Naive thymus-derived CD4-positive, alpha-beta T cell (primary cell): ENCODE measurements at regions of chr2 and their contacts with region 1.

Region 1: DNA sequence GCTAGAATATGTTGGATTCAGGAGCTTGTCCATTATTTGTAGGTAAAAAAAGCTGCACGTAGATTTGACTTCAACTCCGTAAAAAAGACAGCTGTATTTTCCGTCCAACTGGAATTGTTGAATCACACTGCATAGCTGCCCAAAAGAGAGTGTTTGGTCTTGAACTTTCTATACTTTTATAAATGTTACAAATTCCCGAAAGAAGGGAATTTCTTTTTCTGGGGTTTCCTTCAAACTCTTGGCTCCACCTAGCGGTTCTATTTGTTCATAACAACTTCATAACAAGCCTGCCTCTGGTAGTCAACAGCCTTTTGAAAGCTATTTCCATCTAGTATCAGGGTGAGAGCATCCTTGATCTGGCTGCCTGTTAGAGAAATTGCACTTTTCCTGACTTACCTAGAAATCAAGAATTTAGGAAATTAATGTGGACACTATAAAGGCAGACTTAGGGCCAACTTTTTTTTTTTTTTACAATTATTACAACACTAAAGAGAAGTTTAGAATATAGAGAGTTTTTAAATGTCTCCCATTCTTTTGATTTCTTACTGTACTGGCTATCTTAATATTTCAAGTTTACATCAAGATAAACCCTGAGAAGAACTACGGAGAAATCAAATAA is 48.1 kb downstream of the TMEM185B start:
- DNase-seq: peak in 7 of 9 donors; percentile 37 to 63 (median 56)
- ATAC-seq: no peak
- H3K4me3 ChIP-seq: no peak overlapping the region
- H3K4me3 Mint-ChIP-seq: peak overlapping the region in 5 of 10 donors; percentile 7 to 50 (median 20)
- H3K27ac ChIP-seq: peak overlapping the region; percentile 79
- H3K27ac Mint-ChIP-seq: peak overlapping the region in 8 of 9 donors; percentile 84 to 99 (median 96)
- H3K4me1 ChIP-seq: peaks cover 17 to 49% of the 10 kb centered on the region in 2 donors
- H3K4me1 Mint-ChIP-seq: peaks cover 13 to 53% (median 43%) of the 10 kb centered on the region in 7 donors
- H3K27me3 ChIP-seq: no peaks in the 10 kb centered on the region
- H3K27me3 Mint-ChIP-seq: peaks cover 0 to 3% (median 0%) of the 10 kb centered on the region in 5 donors

Region 2: GRCh38 chr2:118808429-118808809 is 1366.7 kb before region 1 on chr2:
- CTCF ChIA-PET with region 1: no interaction called
- POLR2A ChIA-PET with region 1: no interaction called
- intact Hi-C with region 1: no loop called
- DNase-seq: no peak
- ATAC-seq: no peak
- H3K4me3 ChIP-seq: no peak overlapping the region
- H3K4me3 Mint-ChIP-seq: peak overlapping the region in 9 of 10 donors; percentile 33 to 69 (median 60)
- H3K27ac ChIP-seq: no peak overlapping the region
- H3K27ac Mint-ChIP-seq: peak overlapping the region in 1 of 9 donors; percentile 51
- H3K4me1 ChIP-seq: no peaks in the 10 kb centered on the region
- H3K4me1 Mint-ChIP-seq: peaks cover 0 to 16% (median 2%) of the 10 kb centered on the region in 7 donors
- H3K27me3 ChIP-seq: peaks cover 0 to 10% of the 10 kb centered on the region in 2 donors
- H3K27me3 Mint-ChIP-seq: peaks cover 52 to 74% (median 69%) of the 10 kb centered on the region in 5 donors

Region 3: DNA sequence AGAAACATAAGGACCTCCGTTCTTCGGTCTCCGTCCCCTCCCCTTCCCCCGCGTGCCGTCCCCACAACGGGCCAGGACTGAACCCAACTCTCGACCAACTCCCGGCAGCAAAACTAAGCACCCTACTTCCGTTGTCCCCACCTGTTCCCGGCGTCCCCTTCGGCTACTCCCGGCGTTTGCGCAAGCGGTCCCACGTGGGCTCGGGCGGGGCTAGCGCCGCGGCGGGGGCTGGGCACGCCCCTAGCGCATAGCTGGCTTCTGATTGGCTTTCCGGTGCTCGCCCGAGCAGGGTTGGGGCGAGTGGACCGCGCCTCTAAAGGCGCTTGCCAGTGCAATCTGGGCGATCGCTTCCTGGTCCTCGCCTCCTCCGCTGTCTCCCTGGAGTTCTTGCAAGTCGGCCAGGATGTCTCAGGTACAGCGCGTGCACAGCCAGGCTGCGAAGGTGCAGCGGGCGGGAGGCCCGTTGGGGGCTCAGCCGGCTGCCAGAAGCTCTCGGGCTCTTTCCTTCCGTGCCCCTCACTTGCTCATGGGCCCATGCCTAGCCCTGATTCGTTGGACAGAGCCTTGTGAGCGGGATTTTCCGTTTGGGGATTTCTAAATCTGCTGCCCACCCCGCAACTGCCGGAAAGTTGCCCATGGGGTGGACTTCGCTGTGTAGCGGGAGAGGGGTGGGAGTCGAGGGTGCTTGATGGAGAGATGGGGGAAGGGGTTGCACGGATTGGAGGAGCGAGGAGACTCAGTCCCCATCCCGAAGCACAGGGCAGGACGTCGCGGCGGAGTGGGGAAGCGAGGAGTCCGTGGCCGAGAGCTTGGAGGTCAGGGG is 808.2 kb before region 1 on chr2 and contains the starts of genes C2orf76 and DBI:
- CTCF ChIA-PET with region 1: no interaction called
- POLR2A ChIA-PET with region 1: no interaction called
- intact Hi-C with region 1: loop called (anchors 1 to 5 kb)
- DNase-seq: peak; percentile 82 to 94 (median 89)
- ATAC-seq: peak; percentile 97
- H3K4me3 ChIP-seq: peak within 1 kb of the TSS; percentile 80
- H3K4me3 Mint-ChIP-seq: peak within 1 kb of the TSS; percentile 79 to 99 (median 94)
- H3K27ac ChIP-seq: peak within 1 kb of the TSS; percentile 86
- H3K27ac Mint-ChIP-seq: peak within 1 kb of the TSS; percentile 78 to 97 (median 92)
- H3K4me1 ChIP-seq: peaks cover 10 to 19% of the 10 kb centered on the region in 2 donors
- H3K4me1 Mint-ChIP-seq: peaks cover 37 to 64% (median 47%) of the 10 kb centered on the region in 7 donors
- H3K27me3 ChIP-seq: no peaks in the 10 kb centered on the region
- H3K27me3 Mint-ChIP-seq: no peaks in the 10 kb centered on the region
- total RNA-seq, gene C2orf76: 5.1 to 9.2 (median 8.5) TPM
- total RNA-seq, gene DBI: 29.3 to 111 (median 42.7) TPM

Region 4: GRCh38 chr2:119678998-119679710 is 495.9 kb before region 1 on chr2 and contains the start of gene TMEM177:
- CTCF ChIA-PET with region 1: interaction called, 7 read pairs
- POLR2A ChIA-PET with region 1: interaction called, 19 read pairs
- intact Hi-C with region 1: loop called (anchors 1 kb)
- DNase-seq: peak; percentile 72 to 96 (median 87)
- ATAC-seq: peak; percentile 91
- H3K4me3 ChIP-seq: peak within 1 kb of the TSS; percentile 95
- H3K4me3 Mint-ChIP-seq: peak within 1 kb of the TSS; percentile 87 to 96 (median 90)
- H3K27ac ChIP-seq: peak within 1 kb of the TSS; percentile 88
- H3K27ac Mint-ChIP-seq: peak within 1 kb of the TSS; percentile 58 to 99 (median 97)
- H3K4me1 ChIP-seq: peaks cover 0 to 15% of the 10 kb centered on the region in 2 donors
- H3K4me1 Mint-ChIP-seq: peaks cover 25 to 48% (median 38%) of the 10 kb centered on the region in 7 donors
- H3K27me3 ChIP-seq: no peaks in the 10 kb centered on the region
- H3K27me3 Mint-ChIP-seq: peaks cover 0 to 21% (median 0%) of the 10 kb centered on the region in 5 donors
- total RNA-seq, gene TMEM177: 5.5 to 38.1 (median 11.6) TPM

Region 5: GRCh38 chr2:119759451-119760236 is 415.4 kb before region 1 on chr2 and contains the start of gene PTPN4:
- CTCF ChIA-PET with region 1: interaction called, 49 read pairs
- POLR2A ChIA-PET with region 1: interaction called, 11 read pairs
- intact Hi-C with region 1: loop called (anchors 1 kb)
- DNase-seq: peak; percentile 88 to 98 (median 96)
- ATAC-seq: peak; percentile 97
- H3K4me3 ChIP-seq: peak within 1 kb of the TSS; percentile 89
- H3K4me3 Mint-ChIP-seq: peak within 1 kb of the TSS; percentile 87 to 97 (median 94)
- H3K27ac ChIP-seq: peak within 1 kb of the TSS; percentile 83
- H3K27ac Mint-ChIP-seq: peak within 1 kb of the TSS; percentile 60 to 95 (median 91)
- H3K4me1 ChIP-seq: peaks cover 25% of the 10 kb centered on the region in 2 donors
- H3K4me1 Mint-ChIP-seq: peaks cover 22 to 51% (median 39%) of the 10 kb centered on the region in 7 donors
- H3K27me3 ChIP-seq: no peaks in the 10 kb centered on the region
- H3K27me3 Mint-ChIP-seq: peaks cover 0 to 2% (median 0%) of the 10 kb centered on the region in 5 donors
- total RNA-seq, gene PTPN4: 59.9 to 122 (median 104) TPM

Region 6: GRCh38 chr2:120109186-120110061 is 65.6 kb before region 1 on chr2:
- CTCF ChIA-PET with region 1: interaction called, 60 read pairs
- POLR2A ChIA-PET with region 1: interaction called, 30 read pairs
- intact Hi-C with region 1: loop called (anchors 1 kb)
- DNase-seq: peak in 7 of 9 donors; percentile 14 to 73 (median 67)
- ATAC-seq: peak; percentile 80
- H3K4me3 ChIP-seq: peak overlapping the region; percentile 34
- H3K4me3 Mint-ChIP-seq: peak overlapping the region; percentile 30 to 87 (median 70)
- H3K27ac ChIP-seq: peak overlapping the region; percentile 39
- H3K27ac Mint-ChIP-seq: peak overlapping the region; percentile 10 to 90 (median 72)
- H3K4me1 ChIP-seq: peaks cover 17 to 21% of the 10 kb centered on the region in 2 donors
- H3K4me1 Mint-ChIP-seq: peaks cover 19 to 44% (median 36%) of the 10 kb centered on the region in 7 donors
- H3K27me3 ChIP-seq: no peaks in the 10 kb centered on the region
- H3K27me3 Mint-ChIP-seq: peaks cover 0 to 33% (median 0%) of the 10 kb centered on the region in 5 donors

Region 7: GRCh38 chr2:120239488-120240287 is 64.6 kb after region 1 on chr2:
- CTCF ChIA-PET with region 1: no interaction called
- POLR2A ChIA-PET with region 1: no interaction called
- intact Hi-C with region 1: no loop called
- DNase-seq: no peak
- ATAC-seq: no peak
- H3K4me3 ChIP-seq: no peak overlapping the region
- H3K4me3 Mint-ChIP-seq: no peak overlapping the region
- H3K27ac ChIP-seq: no peak overlapping the region
- H3K27ac Mint-ChIP-seq: peak overlapping the region in 1 of 9 donors; percentile 18
- H3K4me1 ChIP-seq: no peaks in the 10 kb centered on the region
- H3K4me1 Mint-ChIP-seq: peaks cover 0 to 8% (median 0%) of the 10 kb centered on the region in 7 donors
- H3K27me3 ChIP-seq: no peaks in the 10 kb centered on the region
- H3K27me3 Mint-ChIP-seq: no peaks in the 10 kb centered on the region

Region 8: DNA sequence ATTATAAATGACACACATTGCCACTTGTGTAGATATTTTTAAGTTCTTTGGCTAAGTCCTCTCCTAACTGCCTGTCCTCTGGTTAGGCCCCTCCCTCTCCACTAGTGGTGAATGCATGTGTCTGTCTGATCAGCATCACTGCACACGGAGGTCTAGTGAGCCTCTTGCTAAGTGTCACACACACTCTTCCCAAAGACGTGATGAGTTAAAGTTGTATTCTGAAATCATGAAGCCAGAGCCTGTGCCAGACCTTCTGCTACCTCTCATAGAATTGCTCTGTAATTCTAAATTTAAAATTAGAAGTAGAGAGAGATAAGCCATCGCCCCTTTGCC is 118.9 kb after region 1 on chr2:
- CTCF ChIA-PET with region 1: interaction called, 3 read pairs
- POLR2A ChIA-PET with region 1: no interaction called
- intact Hi-C with region 1: loop called in 1 of 2 experiments (anchors 5 kb)
- DNase-seq: no peak
- ATAC-seq: no peak
- H3K4me3 ChIP-seq: no peak overlapping the region
- H3K4me3 Mint-ChIP-seq: peak overlapping the region in 1 of 10 donors; percentile 56
- H3K27ac ChIP-seq: no peak overlapping the region
- H3K27ac Mint-ChIP-seq: peak overlapping the region in 1 of 9 donors; percentile 64
- H3K4me1 ChIP-seq: peaks cover 0 to 4% of the 10 kb centered on the region in 2 donors
- H3K4me1 Mint-ChIP-seq: peaks cover 6 to 61% (median 7%) of the 10 kb centered on the region in 7 donors
- H3K27me3 ChIP-seq: no peaks in the 10 kb centered on the region
- H3K27me3 Mint-ChIP-seq: no peaks in the 10 kb centered on the region